ENCODE measurements at regions of chr2 and their contacts with region 1.

Region 1: GRCh38 chr2:197075759-197076337 is 149.3 kb upstream of the PGAP1 start:
- DNase-seq: no peak
- H3K4me3 ChIP-seq: no peak overlapping the region
- H3K27ac ChIP-seq: peak overlapping the region; percentile 10
- H3K4me1 ChIP-seq: peaks cover 74% of the 10 kb centered on the region
- H3K27me3 ChIP-seq: no peaks in the 10 kb centered on the region
- CTCF ChIP-seq: peak; percentile 59

Region 2: GRCh38 chr2:196926562-196927375 is 149.1 kb before region 1 on chr2 and contains the start of gene PGAP1:
- CTCF ChIA-PET with region 1: no interaction called
- POLR2A ChIA-PET with region 1: no interaction called
- intact Hi-C with region 1: loop called (anchors 1 kb)
- DNase-seq: peak; percentile 95
- H3K4me3 ChIP-seq: peak within 1 kb of the TSS; percentile 72
- H3K27ac ChIP-seq: peak within 1 kb of the TSS; percentile 76
- H3K4me1 ChIP-seq: peaks cover 10% of the 10 kb centered on the region
- H3K27me3 ChIP-seq: no peaks in the 10 kb centered on the region
- CTCF ChIP-seq: no peak
- total RNA-seq, gene PGAP1: 40.4 and 46.8 TPM in 2 replicates

Region 3: DNA sequence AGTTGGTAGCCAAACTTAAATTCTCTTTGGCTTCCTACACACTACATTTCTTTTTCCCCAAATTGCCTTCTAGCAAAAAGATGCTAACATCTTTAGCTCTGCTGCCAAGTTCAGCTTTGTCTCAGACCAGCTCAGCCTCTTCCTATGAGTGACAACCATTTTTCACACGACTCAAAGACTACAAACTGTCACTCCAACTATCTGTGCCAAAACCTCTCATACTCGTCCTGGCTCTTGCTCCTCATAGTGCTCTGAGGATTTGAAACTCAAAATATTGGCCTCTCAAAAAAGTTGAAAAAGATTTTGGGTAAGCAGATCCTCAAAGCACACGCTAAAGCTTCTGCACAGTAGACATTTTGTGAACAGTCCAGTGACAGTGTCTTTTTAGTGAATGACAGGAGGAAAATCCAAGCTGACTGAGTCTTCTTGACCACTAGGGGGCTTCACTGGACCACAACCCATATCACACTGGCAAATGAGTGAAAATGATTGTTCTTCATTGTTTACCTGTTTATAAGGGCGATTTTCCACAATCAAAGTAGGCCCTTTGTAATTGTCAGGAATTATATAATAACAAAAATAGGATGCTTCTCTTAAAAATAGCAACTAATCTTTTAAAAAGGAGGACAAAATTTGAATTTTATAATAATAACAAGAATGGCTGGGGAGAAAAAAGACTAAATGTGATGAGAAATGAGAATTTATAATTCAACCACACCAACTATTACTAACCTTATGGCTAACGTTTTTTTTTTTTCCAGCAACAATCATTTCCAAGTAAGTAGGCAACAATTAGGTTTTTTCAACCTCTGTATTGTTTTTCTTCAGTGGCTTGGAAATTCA is 63.8 kb before region 1 on chr2:
- CTCF ChIA-PET with region 1: no interaction called
- POLR2A ChIA-PET with region 1: no interaction called
- intact Hi-C with region 1: loop called (anchors 2 kb)
- DNase-seq: peak; percentile 83
- H3K4me3 ChIP-seq: no peak overlapping the region
- H3K27ac ChIP-seq: no peak overlapping the region
- H3K4me1 ChIP-seq: peaks cover 43% of the 10 kb centered on the region
- H3K27me3 ChIP-seq: no peaks in the 10 kb centered on the region
- CTCF ChIP-seq: peak; percentile 95